Heart right ventricle (tissue), 16 donors: ENCODE measurements at regions of chr7 and their contacts with region 1.

Region 1: DNA sequence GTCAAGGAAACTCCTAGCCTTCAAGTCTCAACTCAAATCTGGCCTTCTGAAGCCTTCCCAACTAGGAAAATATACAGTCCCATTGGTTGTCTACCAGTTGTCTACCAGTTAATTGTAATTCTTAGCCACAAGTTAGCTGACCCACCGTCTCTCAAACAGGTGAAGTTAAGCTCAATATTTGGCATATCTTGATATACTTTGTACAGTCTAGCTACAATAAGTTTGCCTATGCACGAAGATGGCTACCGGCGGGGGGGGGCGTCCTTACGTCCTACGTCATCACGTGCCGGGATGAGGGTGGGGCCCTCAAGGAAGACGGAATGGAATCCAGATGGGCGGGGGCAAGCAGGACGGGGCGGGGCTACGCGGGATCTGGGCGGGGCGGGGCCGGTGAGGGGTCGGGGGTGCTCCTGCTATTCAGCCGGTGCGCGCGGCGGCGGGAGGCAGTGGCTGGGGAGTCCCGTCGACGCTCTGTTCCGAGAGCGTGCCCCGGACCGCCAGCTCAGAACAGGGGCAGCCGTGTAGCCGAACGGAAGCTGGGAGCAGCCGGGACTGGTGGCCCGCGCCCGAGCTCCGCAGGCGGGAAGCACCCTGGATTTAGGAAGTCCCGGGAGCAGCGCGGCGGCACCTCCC is at the start of gene AHR:
- DNase-seq: peak; percentile 92 to 95
- ATAC-seq: peak; percentile 96 to 98 (median 97)
- H3K4me3 ChIP-seq: peak within 1 kb of the TSS; percentile 76 to 97 (median 90)
- H3K27ac ChIP-seq: peak within 1 kb of the TSS; percentile 82 to 97 (median 95)
- H3K4me1 ChIP-seq: peaks cover 0 to 43% (median 36%) of the 10 kb centered on the region in 9 donors
- H3K27me3 ChIP-seq: no peaks in the 10 kb centered on the region
- CTCF ChIP-seq: no peak
- total RNA-seq, gene AHR: 20.8 to 52.8 (median 34.7) TPM

Region 2: DNA sequence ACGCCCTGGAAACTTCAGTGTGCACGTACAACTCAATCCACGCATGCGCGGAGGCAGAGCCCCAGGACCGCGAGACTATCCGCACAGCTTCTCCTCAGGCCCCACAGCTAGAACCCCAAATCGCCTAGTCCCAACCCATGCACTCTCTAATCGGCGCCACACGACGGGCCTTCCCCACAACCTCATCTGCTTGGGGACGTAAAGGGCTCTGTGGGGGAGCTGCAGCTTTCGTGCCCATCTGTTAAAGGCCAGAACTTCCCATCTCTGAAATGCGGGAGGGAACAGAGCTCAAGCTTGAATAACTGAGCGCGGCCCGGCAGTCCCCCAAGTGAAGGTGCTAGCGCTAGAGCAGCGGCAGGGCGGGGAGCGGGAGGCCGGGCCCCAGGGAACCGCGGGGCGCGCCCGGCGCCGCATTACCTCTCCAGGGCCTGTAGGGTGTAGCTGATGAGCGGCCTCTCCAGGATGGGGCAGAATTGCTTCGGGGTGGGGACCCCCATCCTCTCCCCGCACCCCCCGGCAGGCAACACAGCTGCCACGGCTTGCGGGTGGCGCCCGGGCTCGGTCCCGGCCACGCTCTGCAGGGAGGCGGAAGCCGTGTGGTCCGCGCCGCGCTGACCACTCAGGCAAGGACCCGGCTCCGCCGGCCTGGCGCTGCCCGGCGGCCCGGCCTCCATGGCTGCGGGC is 877.5 kb before region 1 on chr7:
- intact Hi-C with region 1: loop called in 1 of 10 experiments (anchors 10 kb)
- DNase-seq: peak; percentile 88 to 90
- ATAC-seq: peak; percentile 90 to 97 (median 96)
- H3K4me3 ChIP-seq: peak overlapping the region; percentile 51 to 82 (median 73)
- H3K27ac ChIP-seq: peak overlapping the region; percentile 96 to 99 (median 98)
- H3K4me1 ChIP-seq: peaks cover 0 to 31% (median 17%) of the 10 kb centered on the region in 9 donors
- H3K27me3 ChIP-seq: no peaks in the 10 kb centered on the region
- CTCF ChIP-seq: peak in 6 of 9 donors; percentile 9 to 46 (median 36)

Region 3: GRCh38 chr7:16982640-16983350 is 315.5 kb before region 1 on chr7:
- intact Hi-C with region 1: loop called in 8 of 10 experiments (anchors 2 to 10 kb)
- DNase-seq: no peak
- ATAC-seq: peak in 5 of 8 donors; percentile 33 to 65 (median 41)
- H3K4me3 ChIP-seq: peak overlapping the region in 1 of 10 donors; percentile 0
- H3K27ac ChIP-seq: no peak overlapping the region
- H3K4me1 ChIP-seq: peaks cover 0 to 28% (median 6%) of the 10 kb centered on the region in 9 donors
- H3K27me3 ChIP-seq: no peaks in the 10 kb centered on the region
- CTCF ChIP-seq: peak; percentile 76 to 97 (median 93)

Region 4: DNA sequence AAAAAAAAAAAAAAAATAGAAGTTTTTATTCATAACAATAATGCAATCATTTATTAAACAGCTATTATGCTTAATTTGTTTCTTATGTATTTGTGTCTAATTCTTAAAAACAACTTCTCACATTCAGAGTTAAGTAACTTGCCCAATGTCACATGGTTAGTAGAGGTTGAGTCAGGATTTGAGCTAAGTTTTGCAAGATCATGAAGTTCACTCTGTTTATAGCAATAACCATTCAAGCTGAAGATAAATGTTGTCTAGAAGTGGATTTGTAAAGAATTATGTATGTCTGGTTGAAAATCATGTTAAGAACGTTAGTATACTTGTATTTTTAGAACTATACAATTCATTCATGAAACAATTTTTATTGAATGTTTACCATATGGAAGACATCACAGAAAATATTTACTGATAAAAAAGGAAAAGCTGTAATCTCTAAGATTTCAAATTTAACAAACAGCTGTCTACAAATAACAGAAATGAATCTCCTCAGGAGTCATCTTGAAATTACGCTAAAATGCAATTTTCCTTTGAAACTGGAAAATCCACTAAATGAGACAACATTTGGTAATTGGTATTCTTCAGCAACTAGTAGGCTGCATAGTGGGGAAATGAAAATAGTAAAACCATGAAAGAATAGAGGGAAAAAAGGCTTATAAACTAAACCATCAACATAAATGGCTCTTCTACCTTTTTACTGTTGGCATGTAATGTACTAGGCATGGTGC is 70.4 kb before region 1 on chr7:
- intact Hi-C with region 1: loop called in 2 of 10 experiments (anchors 2 kb)
- DNase-seq: no peak
- ATAC-seq: no peak
- H3K4me3 ChIP-seq: no peak overlapping the region
- H3K27ac ChIP-seq: no peak overlapping the region
- H3K4me1 ChIP-seq: peaks cover 0 to 22% (median 12%) of the 10 kb centered on the region in 9 donors
- H3K27me3 ChIP-seq: no peaks in the 10 kb centered on the region
- CTCF ChIP-seq: no peak

Region 5: GRCh38 chr7:17530741-17531417 is 232.6 kb after region 1 on chr7:
- intact Hi-C with region 1: loop called in 4 of 10 experiments (anchors 5 to 10 kb)
- DNase-seq: no peak
- ATAC-seq: peak in 1 of 8 donors; percentile 49
- H3K4me3 ChIP-seq: no peak overlapping the region
- H3K27ac ChIP-seq: no peak overlapping the region
- H3K4me1 ChIP-seq: peaks cover 0 to 29% (median 0%) of the 10 kb centered on the region in 9 donors
- H3K27me3 ChIP-seq: no peaks in the 10 kb centered on the region
- CTCF ChIP-seq: peak in 8 of 9 donors; percentile 12 to 61 (median 43)